A549 (cell line): ENCODE measurements at regions of chr2 and their contacts with region 1.

Region 1: DNA sequence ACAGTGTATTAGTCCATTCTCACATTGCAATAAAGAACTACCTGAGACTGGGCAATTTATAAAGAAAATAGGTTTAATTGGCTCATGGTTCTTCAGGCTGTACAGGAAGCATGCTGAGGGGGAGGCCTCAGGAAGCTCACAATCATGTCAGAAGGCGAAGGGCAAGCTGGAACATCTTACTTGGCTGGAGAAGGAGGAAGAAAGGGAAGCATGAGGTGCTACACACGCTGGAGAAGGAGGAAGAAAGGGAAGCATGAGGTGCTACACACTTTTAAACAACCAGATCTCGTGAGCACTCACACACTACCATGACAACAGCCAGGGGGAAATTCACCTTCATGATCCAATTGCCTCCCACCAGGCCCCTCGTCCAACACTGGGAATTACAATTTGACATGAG is 95.3 kb upstream of the FAM110C start:
- DNase-seq: no peak
- ATAC-seq: no peak
- H3K4me3 ChIP-seq: no peak overlapping the region
- H3K27ac ChIP-seq: no peak overlapping the region
- H3K4me1 ChIP-seq: no peaks in the 10 kb centered on the region
- CTCF ChIP-seq: no peak
- EP300 ChIP-seq: no peak
- POLR2A ChIP-seq: no peak
- RAD21 ChIP-seq: no peak

Region 2: DNA sequence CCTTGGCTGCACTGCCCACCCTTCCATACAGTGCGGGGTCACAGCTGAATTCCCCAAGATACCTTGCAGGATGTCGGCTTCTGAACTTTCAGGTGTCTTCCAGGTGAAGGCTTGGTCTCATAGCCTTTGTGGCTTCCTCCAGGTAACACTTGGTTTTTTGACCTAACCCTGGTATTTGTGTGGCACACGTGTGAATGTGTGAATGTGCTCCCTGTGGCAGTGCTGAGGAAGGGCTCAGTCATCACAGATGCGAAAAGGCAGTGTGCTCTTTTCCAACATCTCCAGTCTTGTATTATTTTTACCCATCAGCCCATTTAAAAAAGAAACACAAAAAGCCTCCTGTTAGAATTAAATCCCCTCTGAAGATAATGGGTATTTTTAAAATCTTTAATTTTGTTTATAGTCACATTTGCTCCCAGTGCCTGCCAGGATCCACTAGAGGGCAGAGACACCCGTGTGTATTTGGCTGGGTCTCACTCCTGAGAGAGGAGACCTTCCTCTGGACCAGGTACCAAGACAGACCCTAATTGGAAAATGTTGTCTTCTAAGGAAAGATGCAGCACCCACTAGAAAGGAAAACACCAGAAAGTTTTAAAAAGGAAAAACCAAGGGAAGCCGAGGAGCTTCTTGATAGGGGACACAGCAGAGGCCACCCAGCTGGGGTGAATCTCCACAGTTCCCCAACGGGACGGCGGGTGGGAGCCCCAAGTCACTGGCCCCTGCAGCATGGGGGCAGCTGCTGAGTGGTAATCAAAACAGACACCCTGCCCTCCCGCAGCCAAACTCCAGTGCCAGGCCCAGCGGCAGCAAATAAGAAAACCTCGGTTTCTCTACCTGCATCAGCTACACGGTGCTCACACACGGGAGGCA is 123.0 kb before region 1 on chr2:
- CTCF ChIA-PET with region 1: interaction called, 33 read pairs
- POLR2A ChIA-PET with region 1: no interaction called
- DNase-seq: no peak
- ATAC-seq: peak; percentile 45 to 82; a peak in 3 of 6 replicates
- H3K4me3 ChIP-seq: no peak overlapping the region
- H3K27ac ChIP-seq: no peak overlapping the region
- H3K4me1 ChIP-seq: no peaks in the 10 kb centered on the region
- CTCF ChIP-seq: peak; percentile 62
- EP300 ChIP-seq: no peak
- POLR2A ChIP-seq: no peak
- RAD21 ChIP-seq: peak; percentile 56 to 65; a peak in 4 of 5 replicates

Region 3: DNA sequence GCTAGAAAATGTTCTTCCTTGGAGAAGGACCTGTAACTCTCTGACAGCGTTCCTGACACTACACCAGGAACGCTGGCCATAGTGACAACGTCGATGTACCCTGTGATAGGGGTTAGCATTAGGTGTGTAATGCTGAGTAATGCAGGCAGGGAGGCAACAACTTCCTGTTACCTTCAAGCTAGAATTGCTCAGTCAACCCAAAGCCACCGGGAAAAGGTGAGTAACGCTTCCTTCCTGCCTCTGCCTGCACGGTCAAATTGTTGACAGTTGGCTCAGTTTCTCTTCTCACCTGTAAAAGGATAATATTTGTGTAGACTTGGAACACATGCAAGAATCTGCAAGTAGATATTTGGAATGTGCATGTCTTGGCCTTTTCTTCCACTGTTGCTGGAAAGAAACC is 108.0 kb before region 1 on chr2:
- CTCF ChIA-PET with region 1: no interaction called
- POLR2A ChIA-PET with region 1: no interaction called
- DNase-seq: no peak
- ATAC-seq: no peak
- H3K4me3 ChIP-seq: no peak overlapping the region
- H3K27ac ChIP-seq: no peak overlapping the region
- H3K4me1 ChIP-seq: no peaks in the 10 kb centered on the region
- CTCF ChIP-seq: no peak
- EP300 ChIP-seq: no peak
- POLR2A ChIP-seq: no peak
- RAD21 ChIP-seq: no peak

Region 4: GRCh38 chr2:108920-109809 is 32.4 kb before region 1 on chr2:
- CTCF ChIA-PET with region 1: no interaction called
- POLR2A ChIA-PET with region 1: no interaction called
- DNase-seq: no peak
- ATAC-seq: no peak
- H3K4me3 ChIP-seq: no peak overlapping the region
- H3K27ac ChIP-seq: no peak overlapping the region
- H3K4me1 ChIP-seq: no peaks in the 10 kb centered on the region
- CTCF ChIP-seq: no peak
- EP300 ChIP-seq: no peak
- POLR2A ChIP-seq: no peak
- RAD21 ChIP-seq: no peak

Region 5: GRCh38 chr2:124241-124880 is 17.2 kb before region 1 on chr2:
- CTCF ChIA-PET with region 1: no interaction called
- POLR2A ChIA-PET with region 1: no interaction called
- DNase-seq: no peak
- ATAC-seq: no peak
- H3K4me3 ChIP-seq: no peak overlapping the region
- H3K27ac ChIP-seq: no peak overlapping the region
- H3K4me1 ChIP-seq: no peaks in the 10 kb centered on the region
- CTCF ChIP-seq: no peak
- EP300 ChIP-seq: no peak
- POLR2A ChIP-seq: no peak
- RAD21 ChIP-seq: no peak

Region 6: DNA sequence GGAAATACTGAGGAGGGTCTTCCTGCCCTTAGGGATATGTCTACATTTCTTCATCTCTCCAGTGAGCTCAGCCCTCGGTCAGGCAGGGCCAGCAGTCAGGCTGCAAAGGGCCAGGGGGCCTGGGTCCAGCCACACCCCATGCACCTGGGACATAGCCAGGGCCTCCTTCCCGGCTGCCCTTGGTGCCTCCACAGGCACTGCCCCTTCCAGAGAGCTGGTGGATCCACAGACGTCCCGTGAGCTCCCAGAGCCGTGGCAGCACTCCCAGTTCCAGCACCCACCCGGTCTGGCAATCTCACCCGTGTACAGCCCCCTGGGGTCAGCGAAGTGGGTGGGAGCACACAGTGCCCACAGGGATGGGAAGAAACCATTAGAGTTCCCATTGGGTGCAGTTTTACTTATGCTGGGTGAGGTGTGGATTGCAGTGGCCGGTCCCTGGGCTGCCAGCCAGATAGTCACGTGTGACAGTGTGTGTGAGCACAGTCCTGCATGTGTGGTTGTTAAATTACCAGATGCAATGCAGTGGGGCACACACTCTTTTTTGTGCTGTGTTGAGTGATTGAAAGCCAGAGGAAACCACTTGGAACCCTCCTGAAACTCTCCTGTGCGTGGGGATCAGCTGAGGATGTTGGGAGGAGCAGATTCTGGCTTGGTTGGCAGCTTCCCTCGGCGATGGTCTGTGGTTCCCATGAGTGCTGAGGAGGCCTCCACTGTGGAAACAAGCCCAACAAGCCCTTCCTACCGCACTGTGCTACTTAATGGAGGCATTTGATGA is 940.0 kb after region 1 on chr2:
- CTCF ChIA-PET with region 1: no interaction called
- POLR2A ChIA-PET with region 1: no interaction called
- DNase-seq: no peak
- ATAC-seq: no peak; a peak in 1 of 6 replicates
- H3K4me3 ChIP-seq: no peak overlapping the region
- H3K27ac ChIP-seq: no peak overlapping the region
- H3K4me1 ChIP-seq: no peaks in the 10 kb centered on the region
- CTCF ChIP-seq: no peak
- EP300 ChIP-seq: no peak
- POLR2A ChIP-seq: no peak
- RAD21 ChIP-seq: no peak